OCI-LY7 (cell line): ENCODE measurements at regions of chr10 and their contacts with region 1.

Region 1: GRCh38 chr10:69506834-69507721 is 55.8 kb downstream of the TSPAN15 start:
- DNase-seq: no peak
- H3K4me3 ChIP-seq: no peak overlapping the region
- H3K27ac ChIP-seq: no peak overlapping the region
- H3K4me1 ChIP-seq: peaks cover 5% of the 10 kb centered on the region
- CTCF ChIP-seq: no peak

Region 2: DNA sequence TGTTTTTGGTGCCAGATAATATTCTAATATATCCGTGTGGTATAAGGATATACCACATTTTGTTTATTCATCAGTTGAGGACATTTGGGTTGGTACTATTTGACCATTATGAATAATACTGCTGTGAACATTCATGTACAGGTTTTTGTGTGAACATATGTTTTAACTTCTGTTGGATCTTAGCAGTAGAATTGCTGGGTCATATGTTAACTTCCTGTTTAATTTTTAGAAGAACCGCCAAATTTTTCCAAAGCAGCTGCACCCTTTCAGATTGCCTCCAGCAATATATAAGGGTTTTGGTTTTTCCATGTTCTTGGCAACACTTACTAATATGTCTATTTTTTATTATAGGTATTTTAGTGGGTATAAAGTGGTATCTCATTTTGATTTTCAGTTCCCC is 360.3 kb before region 1 on chr10:
- CTCF ChIA-PET with region 1: no interaction called
- POLR2A ChIA-PET with region 1: no interaction called
- intact Hi-C with region 1: no loop called
- DNase-seq: no peak
- H3K4me3 ChIP-seq: no peak overlapping the region
- H3K27ac ChIP-seq: no peak overlapping the region
- H3K4me1 ChIP-seq: no peaks in the 10 kb centered on the region
- CTCF ChIP-seq: no peak

Region 3: GRCh38 chr10:69237528-69238159 is 269.4 kb before region 1 on chr10:
- CTCF ChIA-PET with region 1: no interaction called
- POLR2A ChIA-PET with region 1: no interaction called
- intact Hi-C with region 1: loop called (anchors 1 kb)
- DNase-seq: peak; percentile 76
- H3K4me3 ChIP-seq: no peak overlapping the region
- H3K27ac ChIP-seq: no peak overlapping the region
- H3K4me1 ChIP-seq: no peaks in the 10 kb centered on the region
- CTCF ChIP-seq: peak; percentile 96

Region 4: GRCh38 chr10:69408318-69409175 is 98.5 kb before region 1 on chr10:
- CTCF ChIA-PET with region 1: no interaction called
- POLR2A ChIA-PET with region 1: no interaction called
- intact Hi-C with region 1: loop called (anchors 1 kb)
- DNase-seq: peak; percentile 92
- H3K4me3 ChIP-seq: no peak overlapping the region
- H3K27ac ChIP-seq: no peak overlapping the region
- H3K4me1 ChIP-seq: peaks cover 28% of the 10 kb centered on the region
- CTCF ChIP-seq: peak; percentile 36

Region 5: DNA sequence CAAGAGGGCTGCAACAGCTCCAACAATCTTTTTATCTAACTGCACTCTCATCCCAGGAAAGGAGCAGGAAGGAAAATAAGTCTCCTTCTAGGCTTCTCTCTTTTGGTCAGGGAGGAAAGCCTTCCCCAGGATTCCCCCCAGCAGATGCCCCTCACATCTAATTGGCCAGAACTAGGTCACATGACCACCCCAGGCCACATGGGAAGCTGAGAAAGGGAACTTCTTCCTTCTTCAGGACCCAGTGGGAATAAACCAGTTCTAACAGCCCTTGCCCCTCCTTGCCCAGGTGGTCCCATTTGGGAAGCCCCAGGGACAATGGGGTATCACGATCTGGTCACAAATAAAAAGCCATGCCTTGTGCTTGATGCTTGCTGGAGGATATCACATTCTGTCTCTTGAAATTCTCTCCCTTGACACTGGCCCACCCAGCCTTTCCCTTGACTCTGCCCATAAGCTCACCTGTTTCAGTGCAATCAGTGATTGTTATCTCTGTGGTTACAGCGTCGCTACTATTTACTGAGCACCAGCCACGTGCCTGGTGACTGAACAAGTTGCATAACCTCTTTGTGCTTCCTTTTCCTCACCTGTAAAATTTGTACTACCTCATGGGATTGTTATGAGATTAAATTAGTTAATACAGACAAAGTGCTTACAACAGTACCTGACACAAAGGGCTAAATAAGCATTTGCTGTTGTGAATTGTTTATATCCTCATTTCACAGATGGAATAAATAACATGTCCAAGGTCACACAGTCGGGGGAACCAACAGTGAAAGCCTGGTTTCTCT is 81.4 kb before region 1 on chr10:
- CTCF ChIA-PET with region 1: interaction called, 7 read pairs
- POLR2A ChIA-PET with region 1: no interaction called
- intact Hi-C with region 1: loop called (anchors 1 kb)
- DNase-seq: no peak
- H3K4me3 ChIP-seq: no peak overlapping the region
- H3K27ac ChIP-seq: no peak overlapping the region
- H3K4me1 ChIP-seq: peaks cover 7% of the 10 kb centered on the region
- CTCF ChIP-seq: no peak